GM18951 (cell line): ENCODE measurements at regions of chr16 and their contacts with region 1.

Region 1: GRCh38 chr16:19265380-19265930 is 20.1 kb upstream of the CLEC19A start:
- POLR2A ChIP-seq: no peak

Region 2: DNA sequence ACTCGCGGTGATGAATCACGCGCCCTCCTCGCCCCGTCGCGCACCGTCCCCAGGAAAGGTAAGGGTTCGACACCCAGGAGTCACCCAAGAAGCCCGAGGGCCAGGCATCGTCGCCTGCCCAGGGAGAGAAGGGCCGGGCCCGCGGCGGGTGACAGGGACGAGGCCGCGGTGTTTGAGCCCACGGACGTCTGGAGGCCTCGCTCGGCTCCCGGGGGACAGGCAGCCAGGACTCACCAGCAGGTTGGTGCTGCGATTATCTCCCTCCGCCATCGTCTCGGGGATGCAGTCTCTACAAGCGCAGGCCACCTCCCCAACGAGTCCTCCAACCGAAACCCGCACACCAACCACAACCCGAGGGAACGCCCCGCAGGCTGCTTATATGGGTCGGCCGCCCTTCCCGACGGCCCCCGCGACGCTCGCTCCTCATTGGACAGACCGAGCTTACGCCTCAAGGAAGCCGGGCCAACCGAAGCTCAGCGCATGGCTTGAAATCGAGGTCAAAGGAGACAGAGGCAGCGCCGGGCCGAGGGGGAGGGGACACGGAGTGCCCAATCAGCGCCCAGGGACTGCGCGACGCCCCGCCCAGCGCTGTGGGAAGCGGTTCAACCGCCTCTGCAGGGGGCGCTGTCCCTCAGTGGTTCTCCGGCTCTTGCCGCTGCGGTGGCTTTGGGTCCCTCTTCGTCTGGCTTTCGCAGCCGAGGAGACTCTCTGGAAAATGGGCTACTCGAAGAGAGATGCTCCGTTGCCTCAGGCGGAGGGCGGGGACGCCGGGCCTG is 464.1 kb before region 1 on chr16 and contains the start of gene ARL6IP1:
- in situ Hi-C with region 1: no loop called
- POLR2A ChIP-seq: peak; percentile 98

Region 3: GRCh38 chr16:19118938-19119431 is 146.5 kb before region 1 on chr16:
- in situ Hi-C with region 1: no loop called
- POLR2A ChIP-seq: no peak

Region 4: GRCh38 chr16:19323596-19323995 is 58.1 kb after region 1 on chr16:
- in situ Hi-C with region 1: loop called (anchors 5 kb)
- POLR2A ChIP-seq: no peak